ENCODE measurements at regions of chr2 and their contacts with region 1.

Region 1: GRCh38 chr2:221129657-221130056 is 442.4 kb downstream of the EPHA4 start:
- DNase-seq: no peak
- H3K4me3 ChIP-seq: no peak overlapping the region
- H3K27ac ChIP-seq: no peak overlapping the region
- H3K4me1 ChIP-seq: no peaks in the 10 kb centered on the region
- H3K27me3 ChIP-seq: no peaks in the 10 kb centered on the region
- CTCF ChIP-seq: no peak

Region 2: DNA sequence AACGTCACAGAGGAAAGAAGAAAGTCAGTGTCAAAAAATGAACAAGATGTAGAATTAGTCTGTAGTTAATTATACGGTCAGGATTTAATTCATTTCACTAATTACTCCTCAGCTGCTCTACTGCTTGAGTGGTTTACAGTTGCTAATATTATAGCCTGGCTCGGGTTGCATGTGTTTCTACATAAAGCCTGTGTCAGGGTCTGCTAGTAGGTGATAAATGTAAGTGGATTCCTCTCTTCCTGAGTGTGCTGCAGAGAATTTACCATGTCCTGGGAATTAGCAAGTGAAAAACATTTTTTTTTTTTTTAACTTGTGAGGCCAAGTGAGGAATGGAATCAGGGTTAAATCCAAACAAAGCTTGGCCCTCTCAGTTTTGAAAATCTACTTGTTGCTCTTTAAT is 180.2 kb before region 1 on chr2:
- CTCF ChIA-PET with region 1: interaction called, 11 read pairs
- POLR2A ChIA-PET with region 1: no interaction called
- intact Hi-C with region 1: no loop called
- DNase-seq: no peak
- H3K4me3 ChIP-seq: no peak overlapping the region
- H3K27ac ChIP-seq: no peak overlapping the region
- H3K4me1 ChIP-seq: no peaks in the 10 kb centered on the region
- H3K27me3 ChIP-seq: no peaks in the 10 kb centered on the region
- CTCF ChIP-seq: no peak

Region 3: GRCh38 chr2:221050020-221050795 is 79.4 kb before region 1 on chr2:
- CTCF ChIA-PET with region 1: no interaction called
- POLR2A ChIA-PET with region 1: no interaction called
- intact Hi-C with region 1: no loop called
- DNase-seq: no peak
- H3K4me3 ChIP-seq: no peak overlapping the region
- H3K27ac ChIP-seq: no peak overlapping the region
- H3K4me1 ChIP-seq: no peaks in the 10 kb centered on the region
- H3K27me3 ChIP-seq: no peaks in the 10 kb centered on the region
- CTCF ChIP-seq: no peak